Mammary epithelial cell (primary cell): ENCODE measurements at regions of chr15 and their contacts with region 1.

Region 1: GRCh38 chr15:45587095-45587860 is at the start of gene BLOC1S6:
- DNase-seq: peak; percentile 91
- H3K4me3 ChIP-seq: peak within 1 kb of the TSS; percentile 68 to 88 (median 79)
- H3K27ac ChIP-seq: peak within 1 kb of the TSS; percentile 93
- H3K4me1 ChIP-seq: peaks cover 19% of the 10 kb centered on the region
- H3K27me3 ChIP-seq: no peaks in the 10 kb centered on the region
- CTCF ChIP-seq: no peak
- total RNA-seq, gene BLOC1S6: 38.0 to 49.2 TPM

Region 2: DNA sequence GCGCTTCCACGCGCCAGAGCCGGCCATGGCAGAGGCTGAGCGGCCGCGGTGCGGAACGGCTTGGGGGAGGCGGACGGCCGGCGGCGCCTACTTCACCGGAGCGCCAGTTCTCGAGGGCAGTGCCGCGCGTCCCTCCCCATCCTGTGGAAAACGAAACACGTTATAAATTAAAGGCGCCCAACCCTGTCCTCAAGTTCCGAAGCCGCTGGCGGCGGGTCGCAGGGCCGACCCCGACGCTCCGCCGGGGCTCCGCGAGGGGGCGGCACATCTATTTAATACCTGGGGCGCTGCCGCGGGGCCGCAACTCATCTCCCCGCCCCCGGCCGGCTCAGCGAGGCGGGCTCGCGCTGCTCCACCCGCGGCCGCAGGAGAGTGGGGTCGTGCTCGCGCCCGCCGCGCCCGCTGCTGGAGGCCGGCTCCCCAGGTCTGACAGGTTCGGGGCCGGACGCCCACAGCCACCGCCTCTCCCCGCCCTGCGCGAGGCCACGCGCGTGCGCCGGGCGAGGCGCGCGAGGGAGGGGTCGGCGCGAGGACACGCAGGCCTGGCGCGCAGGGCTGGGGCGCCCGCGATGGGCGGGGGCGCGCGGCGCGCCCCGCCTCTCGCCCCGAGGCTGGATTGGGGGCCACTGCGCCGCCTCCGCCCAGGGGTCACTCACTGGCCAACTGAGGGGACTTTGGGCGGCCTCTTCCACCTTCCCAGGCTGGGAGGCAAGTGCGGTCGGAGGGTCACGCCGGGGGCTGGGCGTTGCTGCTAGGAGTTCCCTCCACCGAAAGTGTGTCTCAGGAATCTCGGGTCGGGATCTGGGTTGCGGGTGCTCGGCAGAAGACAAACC is 64.7 kb before region 1 on chr15 and contains the start of gene SLC30A4:
- CTCF ChIA-PET with region 1: no interaction called
- dilution Hi-C with region 1: no loop called
- in situ Hi-C with region 1: no loop called
- intact Hi-C with region 1: loop called (anchors 1 kb)
- DNase-seq: peak; percentile 49
- H3K4me3 ChIP-seq: peak within 1 kb of the TSS; percentile 40 to 85 (median 66)
- H3K27ac ChIP-seq: peak within 1 kb of the TSS; percentile 22
- H3K4me1 ChIP-seq: peaks cover 19% of the 10 kb centered on the region
- H3K27me3 ChIP-seq: no peaks in the 10 kb centered on the region
- CTCF ChIP-seq: peak in 1 of 2 donors; percentile 38
- total RNA-seq, gene SLC30A4: 6.8 to 11.2 TPM

Region 3: GRCh38 chr15:45641374-45641781 is 54.1 kb after region 1 on chr15:
- CTCF ChIA-PET with region 1: no interaction called
- dilution Hi-C with region 1: loop called (anchors 5 kb)
- in situ Hi-C with region 1: no loop called
- intact Hi-C with region 1: no loop called
- DNase-seq: peak; percentile 93
- H3K4me3 ChIP-seq: peak overlapping the region in 1 of 3 experiments; percentile 26
- H3K27ac ChIP-seq: peak overlapping the region; percentile 98
- H3K4me1 ChIP-seq: peaks cover 87% of the 10 kb centered on the region
- H3K27me3 ChIP-seq: no peaks in the 10 kb centered on the region
- CTCF ChIP-seq: no peak

Region 4: GRCh38 chr15:45660231-45660979 is 73.1 kb after region 1 on chr15:
- CTCF ChIA-PET with region 1: no interaction called
- dilution Hi-C with region 1: no loop called
- in situ Hi-C with region 1: no loop called
- intact Hi-C with region 1: no loop called
- DNase-seq: peak; percentile 33
- H3K4me3 ChIP-seq: no peak overlapping the region
- H3K27ac ChIP-seq: no peak overlapping the region
- H3K4me1 ChIP-seq: peaks cover 5% of the 10 kb centered on the region
- H3K27me3 ChIP-seq: no peaks in the 10 kb centered on the region
- CTCF ChIP-seq: peak; percentile 8 to 10